ENCODE measurements at regions of chr1 and their contacts with region 1.

Region 1: DNA sequence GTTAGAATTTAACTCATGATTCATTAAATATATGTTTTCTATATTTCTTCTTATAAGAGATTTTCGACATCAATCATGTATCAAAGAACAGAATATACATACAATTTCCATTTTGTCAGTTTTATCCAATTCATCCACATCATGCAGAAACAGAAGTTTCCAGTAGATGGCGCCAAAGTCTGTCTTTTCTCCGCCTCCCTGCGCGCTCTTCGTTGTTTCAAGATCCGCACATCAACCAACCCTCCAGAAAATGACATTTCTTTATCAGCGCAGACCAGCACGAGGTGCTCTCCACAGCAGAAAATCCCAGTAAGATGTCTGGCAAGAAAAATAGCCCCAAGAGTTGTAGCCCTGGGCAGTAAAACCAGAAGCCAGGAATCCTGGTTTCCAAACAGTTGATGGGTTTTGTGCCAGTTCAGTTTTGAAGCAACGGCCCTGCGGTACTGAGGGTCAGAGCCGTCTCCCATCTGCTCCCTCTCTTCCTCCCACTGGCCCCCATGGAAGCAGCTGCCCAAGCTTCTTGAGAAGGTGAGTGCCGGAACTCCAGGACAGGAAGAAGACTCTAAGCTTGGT is 38.6 kb upstream of the GPR137B start:
- DNase-seq: peak; percentile 80
- H3K4me3 Mint-ChIP-seq: no peak overlapping the region
- H3K27ac Mint-ChIP-seq: no peak overlapping the region
- H3K4me1 Mint-ChIP-seq: peaks cover 2% of the 10 kb centered on the region
- H3K27me3 Mint-ChIP-seq: no peaks in the 10 kb centered on the region

Region 2: GRCh38 chr1:236451796-236452373 is 348.2 kb after region 1 on chr1:
- CTCF ChIA-PET with region 1: interaction called, 5 read pairs
- intact Hi-C with region 1: loop called (anchors 2 kb)
- DNase-seq: peak; percentile 57
- H3K4me3 Mint-ChIP-seq: no peak overlapping the region
- H3K27ac Mint-ChIP-seq: no peak overlapping the region
- H3K4me1 Mint-ChIP-seq: no peaks in the 10 kb centered on the region
- H3K27me3 Mint-ChIP-seq: no peaks in the 10 kb centered on the region

Region 3: GRCh38 chr1:236534151-236534651 is 430.5 kb after region 1 on chr1:
- CTCF ChIA-PET with region 1: interaction called, 4 read pairs
- intact Hi-C with region 1: loop called (anchors 5 kb)
- DNase-seq: peak; percentile 64
- H3K4me3 Mint-ChIP-seq: no peak overlapping the region
- H3K27ac Mint-ChIP-seq: peak overlapping the region; percentile 86
- H3K4me1 Mint-ChIP-seq: peaks cover 41% of the 10 kb centered on the region
- H3K27me3 Mint-ChIP-seq: no peaks in the 10 kb centered on the region

Region 4: GRCh38 chr1:236759252-236759859 is 655.6 kb after region 1 on chr1:
- CTCF ChIA-PET with region 1: no interaction called
- intact Hi-C with region 1: loop called (anchors 10 kb)
- DNase-seq: peak; percentile 7
- H3K4me3 Mint-ChIP-seq: no peak overlapping the region
- H3K27ac Mint-ChIP-seq: no peak overlapping the region
- H3K4me1 Mint-ChIP-seq: no peaks in the 10 kb centered on the region
- H3K27me3 Mint-ChIP-seq: no peaks in the 10 kb centered on the region

Region 5: DNA sequence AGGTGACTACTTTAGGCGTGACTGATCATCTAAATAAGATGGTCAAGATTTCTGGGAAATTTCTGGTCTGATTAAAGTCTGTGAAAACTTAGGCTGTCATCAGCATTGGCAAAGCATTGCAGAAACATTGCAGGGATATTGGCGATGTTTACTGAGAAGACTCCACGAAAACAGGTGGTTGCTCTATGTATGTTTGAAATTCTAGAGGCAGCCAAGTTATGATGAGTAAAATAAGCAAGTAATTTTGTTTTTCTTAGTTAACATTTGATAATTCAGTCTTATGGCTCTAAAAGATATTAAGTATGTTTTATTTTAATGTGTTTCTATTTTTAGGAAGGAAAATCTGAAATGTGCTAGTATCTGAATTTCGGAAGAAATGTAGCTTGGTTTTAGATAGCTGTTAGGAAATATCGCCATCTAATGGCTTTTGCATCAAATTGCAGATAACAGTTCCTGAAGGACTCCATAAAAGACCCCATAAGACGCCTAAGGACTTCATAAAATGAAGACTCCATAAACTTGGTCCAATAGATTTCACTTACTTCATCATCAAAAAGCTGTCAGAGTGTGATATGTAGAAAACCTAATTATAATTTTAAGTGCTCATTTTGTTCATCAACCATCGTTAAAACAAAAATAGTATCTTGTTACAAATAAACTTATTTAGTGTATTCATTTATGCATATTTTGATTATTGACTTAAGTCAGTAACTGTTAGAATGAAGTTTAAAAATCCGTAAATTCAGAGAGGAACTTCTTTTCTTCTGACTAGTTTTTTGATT is 1282.8 kb after region 1 on chr1:
- CTCF ChIA-PET with region 1: no interaction called
- intact Hi-C with region 1: loop called (anchors 5 kb)
- DNase-seq: no peak
- H3K4me3 Mint-ChIP-seq: no peak overlapping the region
- H3K27ac Mint-ChIP-seq: no peak overlapping the region
- H3K4me1 Mint-ChIP-seq: no peaks in the 10 kb centered on the region
- H3K27me3 Mint-ChIP-seq: peaks cover 6% of the 10 kb centered on the region

Measured in activated naive CD4-positive, alpha-beta T cell treated with anti-CD3 and anti-CD28 coated beads for 36 hours (primary cell).